ENCODE measurements at regions of chr2 and their contacts with region 1.

Region 1: GRCh38 chr2:127415593-127416505 is 2.4 kb upstream of the PROC start:
- DNase-seq: peak; percentile 88
- ATAC-seq: peak; percentile 89
- H3K4me3 ChIP-seq: peak overlapping the region; percentile 51 to 72 (median 60)
- H3K4me3 Mint-ChIP-seq: peak overlapping the region; percentile 88
- H3K27ac ChIP-seq: no peak overlapping the region
- H3K27ac Mint-ChIP-seq: peak overlapping the region; percentile 65
- H3K4me1 ChIP-seq: peaks cover 31 to 37% of the 10 kb centered on the region in 2 donors
- H3K4me1 Mint-ChIP-seq: peaks cover 52% of the 10 kb centered on the region
- H3K27me3 ChIP-seq: no peaks in the 10 kb centered on the region
- H3K27me3 Mint-ChIP-seq: no peaks in the 10 kb centered on the region
- CTCF ChIP-seq: peak; percentile 90

Region 2: GRCh38 chr2:127355386-127356008 is 60.4 kb before region 1 on chr2:
- CTCF ChIA-PET with region 1: interaction called, 8 read pairs
- POLR2A ChIA-PET with region 1: no interaction called
- intact Hi-C with region 1: loop called (anchors 1 kb)
- DNase-seq: peak; percentile 64
- ATAC-seq: peak; percentile 56
- H3K4me3 ChIP-seq: no peak overlapping the region
- H3K4me3 Mint-ChIP-seq: no peak overlapping the region
- H3K27ac ChIP-seq: peak overlapping the region in 1 of 2 donors; percentile 1
- H3K27ac Mint-ChIP-seq: no peak overlapping the region
- H3K4me1 ChIP-seq: peaks cover 6 to 19% of the 10 kb centered on the region in 2 donors
- H3K4me1 Mint-ChIP-seq: peaks cover 57% of the 10 kb centered on the region
- H3K27me3 ChIP-seq: no peaks in the 10 kb centered on the region
- H3K27me3 Mint-ChIP-seq: no peaks in the 10 kb centered on the region
- CTCF ChIP-seq: peak; percentile 80

Region 3: DNA sequence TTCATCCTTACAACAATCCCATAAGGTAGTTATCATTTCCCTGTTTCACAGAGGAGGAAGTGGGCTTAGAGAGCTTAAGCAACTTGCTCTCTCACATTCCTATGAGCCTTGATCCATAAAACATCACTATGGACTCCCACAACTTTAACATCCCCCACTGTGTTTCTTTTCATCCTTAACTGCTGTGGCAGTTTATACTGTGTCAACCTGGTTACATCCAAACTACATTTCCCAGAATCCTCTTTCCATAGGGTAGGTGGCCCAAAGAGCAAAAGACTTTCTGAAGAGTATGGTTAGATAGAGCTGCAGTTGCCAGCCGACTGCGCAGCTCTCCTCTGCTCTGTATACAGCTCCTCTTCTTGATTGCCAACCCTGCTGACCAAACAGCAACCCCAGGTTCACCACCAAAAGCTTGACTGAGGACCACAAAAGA is 50.6 kb before region 1 on chr2:
- CTCF ChIA-PET with region 1: interaction called, 14 read pairs
- POLR2A ChIA-PET with region 1: no interaction called
- intact Hi-C with region 1: no loop called
- DNase-seq: no peak
- ATAC-seq: no peak
- H3K4me3 ChIP-seq: no peak overlapping the region
- H3K4me3 Mint-ChIP-seq: no peak overlapping the region
- H3K27ac ChIP-seq: no peak overlapping the region
- H3K27ac Mint-ChIP-seq: peak overlapping the region; percentile 72
- H3K4me1 ChIP-seq: peaks cover 19 to 21% of the 10 kb centered on the region in 2 donors
- H3K4me1 Mint-ChIP-seq: peaks cover 61% of the 10 kb centered on the region
- H3K27me3 ChIP-seq: no peaks in the 10 kb centered on the region
- H3K27me3 Mint-ChIP-seq: no peaks in the 10 kb centered on the region
- CTCF ChIP-seq: no peak

Measured in B cell (primary cell).